ENCODE measurements at regions of chr16 and their contacts with region 1.

Region 1: DNA sequence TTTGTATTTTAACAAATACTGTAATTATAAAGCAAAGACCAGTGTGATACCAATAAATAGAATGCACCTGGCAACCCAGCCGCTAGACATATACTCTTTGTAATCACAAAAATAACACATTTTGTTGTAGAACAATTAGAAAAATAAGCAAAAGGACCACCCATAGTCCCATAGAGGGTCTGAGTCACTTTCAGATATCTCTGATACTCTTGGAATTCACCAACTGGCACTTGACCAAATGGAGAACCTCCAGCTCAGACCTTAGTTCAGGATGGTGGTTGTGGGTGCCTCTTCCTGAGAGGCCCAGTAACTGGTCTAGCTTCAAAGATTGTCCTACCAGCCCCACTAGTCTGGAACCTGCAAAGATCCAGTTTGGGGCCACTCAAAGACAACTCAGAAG is 789 bp upstream of the TERF2 start:
- DNase-seq: no peak
- H3K4me3 ChIP-seq: peak overlapping the region in 47 of 59 donors; percentile 62 to 91 (median 77)
- H3K27ac ChIP-seq: peak overlapping the region in 32 of 59 donors; percentile 65 to 96 (median 88)
- H3K27me3 ChIP-seq: no peaks in the 10 kb centered on the region
- CTCF ChIP-seq: no peak

Region 2: DNA sequence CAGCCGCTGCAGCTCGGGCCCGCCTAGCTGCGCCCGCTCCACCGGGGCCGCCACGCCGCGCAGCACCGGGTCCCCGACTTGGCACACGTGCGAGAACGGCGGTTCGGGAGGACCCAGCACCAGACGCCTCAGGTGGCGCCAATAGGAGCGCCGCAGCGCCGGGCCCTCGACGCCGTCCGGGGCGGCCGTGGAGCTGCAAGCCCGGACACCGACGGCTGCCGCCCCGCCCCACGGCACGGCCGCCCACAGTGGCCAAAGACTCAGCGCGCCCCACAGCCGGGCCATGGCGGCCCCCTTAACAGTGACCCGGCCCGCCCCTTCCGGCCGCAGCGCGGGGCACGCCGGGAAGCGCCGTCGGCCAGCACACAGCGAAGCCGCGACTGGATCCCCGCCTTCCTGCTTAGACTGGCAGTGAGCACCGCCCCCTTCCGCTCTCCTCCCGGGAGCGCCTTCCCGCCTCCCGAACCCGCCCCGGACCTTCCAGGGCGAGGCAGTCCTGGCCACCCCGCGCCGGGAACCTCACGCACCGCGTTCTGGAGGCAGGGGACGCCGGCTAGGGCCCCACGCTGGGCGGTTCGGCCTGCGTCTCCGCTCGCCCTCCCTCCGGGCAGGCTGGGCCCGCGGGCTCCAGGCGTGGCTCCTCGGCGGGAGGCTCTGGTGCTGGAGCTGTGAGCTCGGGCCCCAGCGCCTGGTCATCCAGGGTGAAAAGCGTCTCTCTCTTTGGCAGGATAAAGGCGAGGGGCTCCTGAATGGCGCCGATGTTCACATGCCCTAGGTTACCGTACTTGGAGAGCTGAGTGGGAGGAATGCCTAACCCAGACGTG is 56.1 kb before region 1 on chr16 and contains the start of gene PDF:
- intact Hi-C with region 1: loop called in 1 of 2 experiments (anchors 2 kb)
- DNase-seq: peak; percentile 87 to 97 (median 92)
- H3K4me3 ChIP-seq: peak within 1 kb of the TSS; percentile 66 to 99 (median 83)
- H3K27ac ChIP-seq: peak within 1 kb of the TSS; percentile 33 to 96 (median 90)
- H3K27me3 ChIP-seq: no peaks in the 10 kb centered on the region
- CTCF ChIP-seq: peak in 55 of 56 donors; percentile 22 to 76 (median 51)
- total RNA-seq, gene PDF: 3.5 to 17.7 (median 8.1) TPM

Region 3: DNA sequence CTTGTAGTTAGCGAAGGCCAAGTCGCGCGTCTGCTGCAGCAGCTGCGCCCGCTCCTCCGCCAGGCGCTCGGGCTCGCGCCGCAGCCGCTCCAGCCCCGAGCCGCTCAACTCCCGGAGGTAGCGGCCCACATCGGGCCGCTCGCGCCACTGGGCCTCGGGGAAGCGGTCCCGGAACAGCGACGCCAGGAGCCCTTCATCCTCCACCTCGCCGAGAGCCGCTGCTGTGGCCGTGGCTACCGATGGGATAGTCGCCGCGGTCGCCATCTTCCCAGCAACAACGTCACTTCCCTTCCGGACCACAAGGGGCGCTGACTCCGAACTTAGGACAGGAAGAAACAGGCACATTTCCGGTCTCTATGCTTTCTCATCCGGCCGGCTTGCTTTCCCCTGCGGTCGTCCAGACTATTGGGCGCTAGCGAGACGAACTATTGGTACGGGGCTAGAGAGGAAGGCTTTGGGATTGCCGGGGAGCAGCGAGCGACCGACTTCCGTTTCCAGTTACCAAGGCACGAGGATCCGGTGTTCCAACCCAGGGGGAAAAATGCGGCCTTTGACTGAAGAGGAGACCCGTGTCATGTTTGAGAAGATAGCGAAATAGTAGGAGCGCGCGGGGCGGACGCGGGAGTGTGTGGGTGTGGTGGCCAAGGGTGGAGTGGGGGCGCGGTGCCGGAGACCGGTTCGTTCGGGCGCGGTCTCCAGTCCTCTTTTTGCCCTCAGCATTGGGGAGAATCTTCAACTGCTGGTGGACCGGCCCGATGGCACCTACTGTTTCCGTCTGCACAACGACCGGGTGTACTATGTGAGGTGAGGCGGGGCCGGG is 47.1 kb before region 1 on chr16 and contains the starts of genes COG8 and NIP7:
- intact Hi-C with region 1: loop called (anchors 2 kb)
- DNase-seq: peak; percentile 89 to 98 (median 96)
- H3K4me3 ChIP-seq: peak within 1 kb of the TSS; percentile 53 to 100 (median 95)
- H3K27ac ChIP-seq: peak within 1 kb of the TSS; percentile 60 to 98 (median 92)
- H3K27me3 ChIP-seq: no peaks in the 10 kb centered on the region
- CTCF ChIP-seq: peak; percentile 76 to 98 (median 92)
- total RNA-seq, gene COG8: 30.0 to 57.6 (median 41.0) TPM
- total RNA-seq, gene NIP7: 7.2 to 21.6 (median 12.4) TPM

Region 4: DNA sequence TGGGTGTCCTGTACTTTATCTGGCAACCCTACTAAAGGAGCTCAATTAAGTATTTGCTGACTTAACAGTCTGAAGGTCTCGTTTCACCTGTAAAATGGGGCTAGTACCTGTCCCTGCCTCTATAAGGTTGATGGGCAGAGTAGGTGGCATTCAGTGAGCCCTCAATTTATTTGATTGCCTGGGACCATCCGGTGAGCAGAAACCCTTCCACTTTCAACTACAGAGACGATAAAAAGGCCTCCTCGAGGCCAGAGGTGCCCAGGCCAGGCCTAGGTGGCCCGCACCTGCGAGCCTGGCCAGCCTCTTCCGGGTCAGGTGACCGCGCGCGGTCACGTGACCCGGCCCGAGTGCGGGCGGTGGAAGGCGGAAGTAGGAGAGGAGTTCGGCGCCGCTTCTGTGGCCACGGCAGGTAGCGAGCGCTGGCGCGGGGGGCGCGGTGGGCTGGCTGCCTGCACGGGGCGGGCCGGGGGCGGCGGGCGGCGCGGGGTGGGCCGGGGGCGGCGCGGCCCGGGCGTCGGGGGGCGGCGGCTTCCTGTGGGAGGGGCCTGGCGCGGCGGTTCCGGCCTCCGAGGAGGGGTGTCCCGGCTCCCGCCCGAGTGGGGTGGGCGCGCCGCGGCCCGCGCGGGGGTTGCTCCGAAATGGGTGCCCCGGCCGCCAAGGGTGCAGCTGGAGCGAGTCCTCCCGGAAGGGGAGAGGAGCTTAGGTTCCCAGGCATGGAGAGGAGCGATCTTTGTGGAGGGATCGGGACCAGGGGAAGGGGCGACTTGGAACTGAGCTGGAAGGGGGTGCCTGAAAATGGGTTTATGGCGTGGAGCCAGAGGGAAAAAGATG is 375.6 kb after region 1 on chr16 and contains the start of gene WWP2:
- intact Hi-C with region 1: loop called in 1 of 2 experiments (anchors 5 kb)
- DNase-seq: peak; percentile 42 to 76 (median 62)
- H3K4me3 ChIP-seq: peak within 1 kb of the TSS; percentile 72 to 100 (median 89)
- H3K27ac ChIP-seq: peak within 1 kb of the TSS; percentile 36 to 96 (median 89)
- H3K27me3 ChIP-seq: no peaks in the 10 kb centered on the region
- CTCF ChIP-seq: peak in 2 of 56 donors; percentile 10 to 15
- total RNA-seq, gene WWP2: 43.5 to 81.3 (median 58.5) TPM